Activated CD4-positive, alpha-beta T cell treated with anti-CD3 and anti-CD28 coated beads for 36 hours (primary cell): ENCODE measurements at regions of chr10 and their contacts with region 1.

Region 1: GRCh38 chr10:101587725-101588653 is at the starts of genes DPCD and POLL:
- DNase-seq: peak; percentile 97
- ATAC-seq: peak; percentile 98
- H3K4me3 Mint-ChIP-seq: peak within 1 kb of the TSS; percentile 86
- H3K27ac Mint-ChIP-seq: peak within 1 kb of the TSS; percentile 81
- H3K4me1 Mint-ChIP-seq: peaks cover 18% of the 10 kb centered on the region
- H3K27me3 Mint-ChIP-seq: no peaks in the 10 kb centered on the region
- total RNA-seq, gene DPCD: 15.5 to 19.3 TPM
- total RNA-seq, gene POLL: 30.2 to 31.4 TPM

Region 2: DNA sequence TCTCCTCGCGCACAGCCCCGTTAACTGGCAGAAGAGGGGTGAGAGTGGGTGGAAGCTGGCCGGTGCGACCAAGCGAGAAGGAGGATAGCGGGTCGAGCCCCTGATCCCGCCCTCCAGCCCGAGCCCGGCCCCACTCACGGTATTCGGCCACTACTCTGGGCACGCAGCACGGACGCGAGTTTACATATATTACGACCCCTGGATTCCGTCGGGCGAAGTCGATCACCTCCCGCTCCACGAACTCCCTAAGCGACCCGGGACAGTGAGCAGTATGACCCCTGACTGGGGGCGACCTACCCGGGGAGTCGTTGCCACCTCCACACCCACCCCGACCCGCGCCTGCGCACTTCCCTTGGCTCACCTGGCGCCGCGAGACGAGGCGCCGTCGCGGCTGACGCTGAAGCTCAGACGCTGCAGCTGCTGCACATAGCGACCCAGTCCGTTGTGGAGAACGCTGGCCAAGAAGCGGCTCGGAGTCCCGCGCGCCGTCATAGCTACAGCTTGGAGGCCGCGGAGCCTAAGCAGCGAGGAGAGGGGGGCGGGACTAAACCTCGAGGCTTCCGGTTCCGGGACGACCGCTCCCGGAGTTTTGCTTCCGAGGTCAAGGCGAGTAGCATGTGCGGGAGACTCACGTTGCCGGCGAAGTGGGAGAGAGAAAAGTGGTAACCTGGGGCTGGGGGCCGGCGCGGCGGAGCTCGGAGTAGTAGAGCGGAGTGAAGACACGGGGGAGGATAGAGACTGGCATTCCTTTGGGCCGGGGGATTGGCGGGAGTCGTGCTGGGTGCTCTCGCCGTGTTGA is 600.8 kb before region 1 on chr10 and contains the starts of genes MRPL43 and TWNK:
- CTCF ChIA-PET with region 1: no interaction called
- POLR2A ChIA-PET with region 1: no interaction called
- intact Hi-C with region 1: loop called in 1 of 2 experiments (anchors 1 kb)
- DNase-seq: peak; percentile 93
- ATAC-seq: peak; percentile 98
- H3K4me3 Mint-ChIP-seq: peak within 1 kb of the TSS; percentile 100
- H3K27ac Mint-ChIP-seq: peak within 1 kb of the TSS; percentile 94
- H3K4me1 Mint-ChIP-seq: peaks cover 43% of the 10 kb centered on the region
- H3K27me3 Mint-ChIP-seq: no peaks in the 10 kb centered on the region
- total RNA-seq, gene MRPL43: 53.4 to 62.6 TPM
- total RNA-seq, gene TWNK: 13.8 to 17.9 TPM

Region 3: GRCh38 chr10:101060036-101060950 is 527.7 kb before region 1 on chr10:
- CTCF ChIA-PET with region 1: no interaction called
- POLR2A ChIA-PET with region 1: no interaction called
- intact Hi-C with region 1: loop called in 1 of 2 experiments (anchors 5 kb)
- DNase-seq: peak; percentile 95
- ATAC-seq: peak; percentile 75
- H3K4me3 Mint-ChIP-seq: peak overlapping the region; percentile 82
- H3K27ac Mint-ChIP-seq: peak overlapping the region; percentile 96
- H3K4me1 Mint-ChIP-seq: peaks cover 22% of the 10 kb centered on the region
- H3K27me3 Mint-ChIP-seq: peaks cover 22% of the 10 kb centered on the region

Region 4: GRCh38 chr10:101617102-101617823 is 29.3 kb after region 1 on chr10:
- CTCF ChIA-PET with region 1: no interaction called
- POLR2A ChIA-PET with region 1: interaction called, 10 read pairs
- intact Hi-C with region 1: no loop called
- DNase-seq: no peak
- ATAC-seq: no peak
- H3K4me3 Mint-ChIP-seq: no peak overlapping the region
- H3K27ac Mint-ChIP-seq: no peak overlapping the region
- H3K4me1 Mint-ChIP-seq: no peaks in the 10 kb centered on the region
- H3K27me3 Mint-ChIP-seq: no peaks in the 10 kb centered on the region

Region 5: DNA sequence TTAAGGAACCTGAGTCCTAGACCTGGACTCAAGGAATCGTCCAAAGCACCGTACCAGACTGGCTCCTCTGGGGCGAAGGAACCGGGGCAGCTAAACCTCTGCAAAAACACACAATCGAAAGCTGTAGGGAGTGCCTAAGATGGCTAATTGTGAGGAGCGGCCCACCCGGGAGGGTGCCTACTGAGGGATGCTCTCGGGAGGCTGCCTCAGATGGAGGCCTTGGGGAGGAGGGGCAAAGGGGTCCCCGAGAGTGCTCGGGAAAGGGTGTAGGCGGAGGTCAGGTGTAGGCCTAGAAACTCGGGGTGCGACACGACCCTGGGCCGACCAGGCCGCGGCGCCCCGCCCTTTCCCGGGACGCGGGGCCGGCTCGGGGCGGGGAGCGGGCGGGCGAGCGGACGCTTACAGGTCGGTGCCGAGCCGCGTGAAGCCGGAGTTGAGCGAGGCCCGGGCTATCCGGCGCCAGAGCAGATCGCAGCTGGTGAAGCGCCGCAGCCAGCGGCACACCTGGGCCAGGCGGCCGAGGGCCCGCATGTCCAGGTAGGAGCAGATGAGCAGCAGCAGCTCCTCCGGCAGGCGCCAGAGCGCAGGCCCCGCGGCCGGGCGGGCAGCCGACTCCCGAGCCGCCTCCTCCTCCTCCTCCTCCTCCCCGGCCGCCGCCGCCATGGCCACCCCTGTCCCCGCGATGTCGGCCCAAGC is 106.1 kb after region 1 on chr10:
- CTCF ChIA-PET with region 1: no interaction called
- POLR2A ChIA-PET with region 1: no interaction called
- intact Hi-C with region 1: loop called in 1 of 2 experiments (anchors 1 kb)
- DNase-seq: peak; percentile 80
- ATAC-seq: peak; percentile 76
- H3K4me3 Mint-ChIP-seq: peak overlapping the region; percentile 88
- H3K27ac Mint-ChIP-seq: peak overlapping the region; percentile 97
- H3K4me1 Mint-ChIP-seq: peaks cover 43% of the 10 kb centered on the region
- H3K27me3 Mint-ChIP-seq: no peaks in the 10 kb centered on the region

Region 6: GRCh38 chr10:102055647-102056419 is 467.8 kb after region 1 on chr10 and contains the start of gene ARMH3:
- CTCF ChIA-PET with region 1: interaction called, 3 read pairs
- POLR2A ChIA-PET with region 1: no interaction called
- intact Hi-C with region 1: loop called in 1 of 2 experiments (anchors 1 kb)
- DNase-seq: peak; percentile 96
- ATAC-seq: peak; percentile 98
- H3K4me3 Mint-ChIP-seq: peak within 1 kb of the TSS; percentile 95
- H3K27ac Mint-ChIP-seq: peak within 1 kb of the TSS; percentile 93
- H3K4me1 Mint-ChIP-seq: peaks cover 40% of the 10 kb centered on the region
- H3K27me3 Mint-ChIP-seq: no peaks in the 10 kb centered on the region
- total RNA-seq, gene ARMH3: 16.0 to 21.0 TPM